ENCODE measurements at regions of chr15 and their contacts with region 1.

Region 1: DNA sequence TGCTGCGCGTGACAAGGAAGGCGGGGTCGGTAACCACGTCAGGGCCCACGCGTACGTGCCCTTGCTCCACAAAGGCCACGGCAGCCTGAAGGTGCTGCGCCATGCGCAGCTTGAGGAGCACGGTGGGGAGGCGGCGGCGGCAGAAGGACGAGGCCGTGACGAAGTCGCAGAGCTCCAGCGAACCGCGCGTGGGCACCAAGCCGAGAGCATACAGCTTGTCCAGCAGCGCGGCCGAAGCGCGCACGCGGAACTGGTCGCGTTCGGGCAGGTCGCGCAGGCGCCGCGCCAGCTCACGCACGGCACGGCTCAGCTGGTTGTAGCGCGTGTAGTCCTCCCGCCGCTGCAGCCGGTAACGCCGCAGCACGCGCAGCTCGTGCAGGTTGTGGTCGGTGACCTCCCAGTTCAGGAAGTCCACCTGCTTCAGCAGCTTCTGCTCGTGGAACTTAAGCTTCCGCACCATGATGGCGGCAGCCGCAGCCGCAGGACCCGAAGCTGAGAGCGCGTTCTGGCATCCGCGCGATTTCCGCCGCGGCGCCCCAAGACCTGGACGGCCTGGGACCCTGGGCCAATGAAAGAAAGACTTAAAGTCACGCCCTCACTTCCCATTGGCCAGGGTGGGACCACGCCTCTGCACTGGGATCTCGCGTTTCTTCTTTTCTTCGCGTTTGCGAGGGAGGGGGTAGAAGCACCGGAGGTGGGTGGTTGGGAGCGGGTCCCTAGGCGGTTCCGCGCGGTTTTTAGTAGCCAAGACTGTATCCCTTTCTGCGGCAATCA is at the start of gene IMP3:
- DNase-seq: peak; percentile 98
- ATAC-seq: peak; percentile 92
- H3K4me3 Mint-ChIP-seq: peak within 1 kb of the TSS; percentile 90
- H3K27ac Mint-ChIP-seq: peak within 1 kb of the TSS; percentile 90
- H3K4me1 Mint-ChIP-seq: peaks cover 23% of the 10 kb centered on the region
- H3K27me3 Mint-ChIP-seq: no peaks in the 10 kb centered on the region
- CTCF ChIP-seq: no peak
- total RNA-seq, gene IMP3: 101 to 105 TPM

Region 2: GRCh38 chr15:75428152-75428551 is 211.7 kb before region 1 on chr15:
- CTCF ChIA-PET with region 1: no interaction called
- POLR2A ChIA-PET with region 1: no interaction called
- intact Hi-C with region 1: no loop called
- DNase-seq: no peak
- ATAC-seq: no peak
- H3K4me3 Mint-ChIP-seq: no peak overlapping the region
- H3K27ac Mint-ChIP-seq: no peak overlapping the region
- H3K4me1 Mint-ChIP-seq: peaks cover 27% of the 10 kb centered on the region
- H3K27me3 Mint-ChIP-seq: no peaks in the 10 kb centered on the region
- CTCF ChIP-seq: no peak

Region 3: GRCh38 chr15:75453703-75454470 is 186.0 kb before region 1 on chr15:
- CTCF ChIA-PET with region 1: interaction called, 15 read pairs
- POLR2A ChIA-PET with region 1: interaction called, 77 read pairs
- intact Hi-C with region 1: loop called (anchors 5 kb)
- DNase-seq: peak; percentile 98
- ATAC-seq: peak; percentile 41
- H3K4me3 Mint-ChIP-seq: peak overlapping the region; percentile 96
- H3K27ac Mint-ChIP-seq: peak overlapping the region; percentile 100
- H3K4me1 Mint-ChIP-seq: peaks cover 18% of the 10 kb centered on the region
- H3K27me3 Mint-ChIP-seq: no peaks in the 10 kb centered on the region
- CTCF ChIP-seq: no peak

Region 4: GRCh38 chr15:75578948-75579920 is 60.7 kb before region 1 on chr15 and contains the start of gene PTPN9:
- CTCF ChIA-PET with region 1: interaction called, 7 read pairs
- POLR2A ChIA-PET with region 1: interaction called, 12 read pairs
- intact Hi-C with region 1: no loop called
- DNase-seq: peak; percentile 79
- ATAC-seq: peak; percentile 89
- H3K4me3 Mint-ChIP-seq: peak within 1 kb of the TSS; percentile 88
- H3K27ac Mint-ChIP-seq: peak within 1 kb of the TSS; percentile 91
- H3K4me1 Mint-ChIP-seq: peaks cover 18% of the 10 kb centered on the region
- H3K27me3 Mint-ChIP-seq: no peaks in the 10 kb centered on the region
- CTCF ChIP-seq: peak; percentile 71
- total RNA-seq, gene PTPN9: 12.3 to 12.9 TPM

Region 5: DNA sequence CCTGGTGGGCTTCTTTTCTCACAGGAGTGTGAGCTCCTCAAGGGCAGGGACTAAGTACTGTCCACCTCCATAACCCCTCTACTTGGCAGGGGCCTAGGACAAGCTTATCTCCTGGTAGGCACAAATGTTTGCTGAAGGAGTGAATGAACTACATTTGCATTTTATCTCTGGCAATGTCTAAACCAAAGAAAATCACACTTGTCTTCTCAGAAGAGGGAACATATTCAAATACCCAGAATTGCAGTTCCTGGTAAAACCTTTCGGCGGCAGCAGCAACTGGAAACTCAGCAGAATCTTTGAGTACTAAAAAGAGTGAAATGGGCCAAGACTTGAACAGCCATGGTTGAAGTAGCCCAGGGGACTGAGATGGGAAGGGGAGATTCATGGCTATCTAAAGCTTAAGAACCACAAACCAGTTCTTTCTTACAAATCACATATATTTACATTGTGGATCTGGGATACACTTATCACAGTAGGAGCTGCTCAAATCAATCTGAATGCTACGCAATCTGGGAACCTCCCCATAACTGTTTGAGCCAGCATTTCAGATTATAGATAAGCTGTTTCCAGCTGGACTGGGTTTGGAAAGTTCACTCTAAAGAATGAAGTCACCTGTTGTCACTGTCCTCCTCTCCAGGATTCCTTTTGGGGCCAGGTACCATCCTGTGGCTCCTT is 42.1 kb before region 1 on chr15:
- CTCF ChIA-PET with region 1: interaction called, 10 read pairs
- POLR2A ChIA-PET with region 1: interaction called, 7 read pairs
- intact Hi-C with region 1: no loop called
- DNase-seq: peak; percentile 79
- ATAC-seq: peak; percentile 88
- H3K4me3 Mint-ChIP-seq: peak overlapping the region; percentile 25
- H3K27ac Mint-ChIP-seq: peak overlapping the region; percentile 84
- H3K4me1 Mint-ChIP-seq: peaks cover 25% of the 10 kb centered on the region
- H3K27me3 Mint-ChIP-seq: no peaks in the 10 kb centered on the region
- CTCF ChIP-seq: peak; percentile 64

Region 6: DNA sequence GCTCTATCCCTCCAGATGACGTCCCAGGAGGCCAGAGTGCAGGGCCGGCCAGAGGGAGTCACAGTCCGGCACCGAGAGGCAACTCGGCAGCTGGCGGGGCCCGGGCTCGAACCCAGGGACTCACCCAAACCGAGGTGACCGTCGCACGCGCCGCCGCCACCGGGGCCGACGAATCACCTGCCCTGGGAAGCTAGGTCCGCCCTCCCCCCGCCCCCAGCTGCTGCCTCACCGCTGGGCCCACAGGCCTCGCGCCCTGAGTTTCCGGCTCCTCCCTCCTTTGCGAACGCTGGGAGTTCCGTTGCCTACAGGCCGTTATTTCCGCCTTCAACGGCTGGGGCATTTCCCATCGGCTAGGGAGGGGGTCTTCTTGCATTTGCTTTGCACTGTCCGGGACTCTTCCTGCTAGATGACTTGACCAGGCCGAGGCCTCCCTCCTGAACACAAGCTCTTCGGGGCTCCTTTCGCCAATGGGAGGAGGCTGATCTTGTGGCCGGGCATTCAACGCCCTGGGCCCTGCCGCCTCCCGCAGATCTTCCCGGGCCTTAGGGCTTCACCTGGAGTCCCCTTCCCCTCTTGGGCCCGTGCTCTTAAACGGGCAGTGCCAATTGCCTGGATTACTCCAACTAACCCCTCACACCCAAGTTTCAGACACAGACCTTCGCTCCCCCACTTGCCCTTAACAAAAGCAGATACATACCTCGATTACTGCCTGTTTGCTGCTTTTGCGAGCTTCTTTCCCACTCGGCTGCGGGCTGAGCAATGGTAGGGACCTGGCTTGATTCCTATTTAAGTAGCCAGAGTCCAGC is 14.2 kb before region 1 on chr15 and contains the start of gene SNUPN:
- CTCF ChIA-PET with region 1: interaction called, 17 read pairs
- POLR2A ChIA-PET with region 1: interaction called, 64 read pairs
- intact Hi-C with region 1: no loop called
- DNase-seq: peak; percentile 97
- ATAC-seq: peak; percentile 91
- H3K4me3 Mint-ChIP-seq: peak within 1 kb of the TSS; percentile 94
- H3K27ac Mint-ChIP-seq: peak within 1 kb of the TSS; percentile 98
- H3K4me1 Mint-ChIP-seq: peaks cover 36% of the 10 kb centered on the region
- H3K27me3 Mint-ChIP-seq: no peaks in the 10 kb centered on the region
- CTCF ChIP-seq: no peak
- total RNA-seq, gene SNUPN: 28.2 to 28.5 TPM